CD14-positive monocyte (primary cell): ENCODE measurements at regions of chr18 and their contacts with region 1.

Region 1: GRCh38 chr18:66676699-66677098 is 72.8 kb upstream of the CDH19 start:
- DNase-seq: no peak
- H3K4me3 ChIP-seq: no peak overlapping the region
- H3K4me3 Mint-ChIP-seq: no peak overlapping the region
- H3K27ac ChIP-seq: no peak overlapping the region
- H3K27ac Mint-ChIP-seq: no peak overlapping the region
- H3K4me1 ChIP-seq: no peaks in the 10 kb centered on the region
- H3K4me1 Mint-ChIP-seq: no peaks in the 10 kb centered on the region
- H3K27me3 ChIP-seq: no peaks in the 10 kb centered on the region
- H3K27me3 Mint-ChIP-seq: peaks cover 0 to 2% (median 0%) of the 10 kb centered on the region in 3 donors
- CTCF ChIP-seq: no peak

Region 2: GRCh38 chr18:66621816-66622576 is 54.7 kb before region 1 on chr18:
- intact Hi-C with region 1: loop called in 1 of 2 experiments (anchors 10 kb)
- DNase-seq: no peak
- H3K4me3 ChIP-seq: no peak overlapping the region
- H3K4me3 Mint-ChIP-seq: no peak overlapping the region
- H3K27ac ChIP-seq: no peak overlapping the region
- H3K27ac Mint-ChIP-seq: no peak overlapping the region
- H3K4me1 ChIP-seq: no peaks in the 10 kb centered on the region
- H3K4me1 Mint-ChIP-seq: peaks cover 3% of the 10 kb centered on the region
- H3K27me3 ChIP-seq: no peaks in the 10 kb centered on the region
- H3K27me3 Mint-ChIP-seq: peaks cover 0 to 6% (median 5%) of the 10 kb centered on the region in 3 donors
- CTCF ChIP-seq: no peak

Region 3: DNA sequence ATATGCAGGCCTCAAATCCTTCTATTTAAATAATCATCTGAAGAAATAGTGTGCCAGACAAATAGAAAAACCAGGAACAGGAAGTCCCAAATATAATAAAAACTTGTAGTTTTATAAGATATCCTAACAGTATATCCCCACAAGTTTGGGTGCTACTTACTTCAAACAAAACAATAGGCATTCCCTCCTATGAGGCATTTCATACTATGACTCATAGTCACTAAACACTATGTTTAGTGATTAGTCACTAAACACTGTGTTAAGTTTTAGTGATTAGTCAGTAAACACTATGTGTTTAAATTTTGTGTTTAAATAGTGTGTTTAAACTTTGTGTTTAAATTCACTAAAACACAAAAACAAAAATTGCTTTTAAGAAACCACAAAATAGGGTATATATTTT is 334.2 kb after region 1 on chr18:
- intact Hi-C with region 1: no loop called
- DNase-seq: no peak
- H3K4me3 ChIP-seq: no peak overlapping the region
- H3K4me3 Mint-ChIP-seq: no peak overlapping the region
- H3K27ac ChIP-seq: no peak overlapping the region
- H3K27ac Mint-ChIP-seq: no peak overlapping the region
- H3K4me1 ChIP-seq: no peaks in the 10 kb centered on the region
- H3K4me1 Mint-ChIP-seq: no peaks in the 10 kb centered on the region
- H3K27me3 ChIP-seq: no peaks in the 10 kb centered on the region
- H3K27me3 Mint-ChIP-seq: no peaks in the 10 kb centered on the region
- CTCF ChIP-seq: no peak